ENCODE measurements at regions of chr6 and their contacts with region 1.

Region 1: GRCh38 chr6:144190593-144190992 is 40.3 kb downstream of the STX11 start:
- DNase-seq: peak; percentile 95
- H3K4me3 ChIP-seq: no peak overlapping the region
- H3K27ac ChIP-seq: no peak overlapping the region
- H3K4me1 ChIP-seq: peaks cover 14% of the 10 kb centered on the region
- H3K27me3 ChIP-seq: no peaks in the 10 kb centered on the region
- CTCF ChIP-seq: peak in 1 of 2 donors; percentile 5
- POLR2A ChIP-seq: peak; percentile 57

Region 2: GRCh38 chr6:144149891-144150709 is 40.5 kb before region 1 on chr6 and contains the start of gene STX11:
- CTCF ChIA-PET with region 1: no interaction called
- POLR2A ChIA-PET with region 1: no interaction called
- dilution Hi-C with region 1: no loop called
- intact Hi-C with region 1: loop called (anchors 1 kb)
- DNase-seq: peak; percentile 53
- H3K4me3 ChIP-seq: peak within 1 kb of the TSS; percentile 41 to 69 (median 52)
- H3K27ac ChIP-seq: peak within 1 kb of the TSS; percentile 72
- H3K4me1 ChIP-seq: peaks cover 16% of the 10 kb centered on the region
- H3K27me3 ChIP-seq: no peaks in the 10 kb centered on the region
- CTCF ChIP-seq: peak in 1 of 2 donors; percentile 27
- POLR2A ChIP-seq: peak; percentile 75
- total RNA-seq, gene STX11: 4.7 and 6.0 TPM in 2 replicates

Region 3: GRCh38 chr6:144158133-144158532 is 32.5 kb before region 1 on chr6:
- CTCF ChIA-PET with region 1: interaction called, 15 read pairs
- POLR2A ChIA-PET with region 1: interaction called, 4 read pairs
- dilution Hi-C with region 1: no loop called
- intact Hi-C with region 1: loop called (anchors 1 kb)
- DNase-seq: peak; percentile 79
- H3K4me3 ChIP-seq: no peak overlapping the region
- H3K27ac ChIP-seq: peak overlapping the region; percentile 93
- H3K4me1 ChIP-seq: peaks cover 32% of the 10 kb centered on the region
- H3K27me3 ChIP-seq: no peaks in the 10 kb centered on the region
- CTCF ChIP-seq: no peak
- POLR2A ChIP-seq: no peak

Measured in endothelial cell of umbilical vein (primary cell).